ENCODE measurements at regions of chr3 and their contacts with region 1.

Region 1: GRCh38 chr3:8713901-8714759 is 19.5 kb upstream of the CAV3 start:
- DNase-seq: peak in 1 of 2 experiments; percentile 67
- H3K4me3 ChIP-seq: no peak overlapping the region
- H3K27ac ChIP-seq: no peak overlapping the region
- H3K4me1 ChIP-seq: no peaks in the 10 kb centered on the region; a peak in 1 of 7 replicates
- H3K27me3 ChIP-seq: peaks cover 39 to 66% (median 63%) of the 10 kb centered on the region in 4 experiments
- CTCF ChIP-seq: peak; percentile 73 to 77 (median 77)
- EP300 ChIP-seq: no peak
- POLR2A ChIP-seq: no peak
- RAD21 ChIP-seq: peak; percentile 45 to 63

Region 2: GRCh38 chr3:8663177-8664061 is 50.7 kb before region 1 on chr3:
- CTCF ChIA-PET with region 1: interaction called, 20 read pairs
- POLR2A ChIA-PET with region 1: no interaction called
- DNase-seq: peak; percentile 74 to 94
- H3K4me3 ChIP-seq: no peak overlapping the region
- H3K27ac ChIP-seq: no peak overlapping the region
- H3K4me1 ChIP-seq: peaks cover 0 to 6% (median 1%) of the 10 kb centered on the region in 4 experiments; a peak in 2 of 7 replicates
- H3K27me3 ChIP-seq: peaks cover 0 to 3% (median 0%) of the 10 kb centered on the region in 4 experiments; a peak in 2 of 7 replicates
- CTCF ChIP-seq: peak; percentile 66 to 80 (median 76)
- EP300 ChIP-seq: no peak
- POLR2A ChIP-seq: no peak
- RAD21 ChIP-seq: peak; percentile 67 to 76

Region 3: GRCh38 chr3:8733332-8734094 is 19.4 kb after region 1 on chr3 and contains the start of gene CAV3:
- CTCF ChIA-PET with region 1: interaction called, 37 read pairs
- POLR2A ChIA-PET with region 1: no interaction called
- DNase-seq: no peak
- H3K4me3 ChIP-seq: no peak within 1 kb of the TSS
- H3K27ac ChIP-seq: no peak within 1 kb of the TSS
- H3K4me1 ChIP-seq: peaks cover 0 to 7% (median 3%) of the 10 kb centered on the region in 4 experiments; a peak in 4 of 7 replicates
- H3K27me3 ChIP-seq: peaks cover 0 to 2% (median 0%) of the 10 kb centered on the region in 4 experiments; a peak in 3 of 7 replicates
- CTCF ChIP-seq: no peak
- EP300 ChIP-seq: no peak
- POLR2A ChIP-seq: no peak
- RAD21 ChIP-seq: no peak
- total RNA-seq, gene CAV3: not detected in 2 replicates

Region 4: GRCh38 chr3:8741581-8742261 is 27.6 kb after region 1 on chr3:
- CTCF ChIA-PET with region 1: interaction called, 12 read pairs
- POLR2A ChIA-PET with region 1: no interaction called
- DNase-seq: peak in 1 of 2 experiments; percentile 70
- H3K4me3 ChIP-seq: peak overlapping the region in 1 of 4 experiments; percentile 42; a peak in 3 of 8 replicates
- H3K27ac ChIP-seq: no peak overlapping the region
- H3K4me1 ChIP-seq: peaks cover 1 to 20% (median 8%) of the 10 kb centered on the region in 4 experiments
- H3K27me3 ChIP-seq: peaks cover 0 to 4% (median 0%) of the 10 kb centered on the region in 4 experiments; a peak in 1 of 7 replicates
- CTCF ChIP-seq: no peak; a peak in 1 of 4 replicates
- EP300 ChIP-seq: no peak
- POLR2A ChIP-seq: no peak
- RAD21 ChIP-seq: no peak

Region 5: GRCh38 chr3:8755563-8756237 is 41.6 kb after region 1 on chr3:
- CTCF ChIA-PET with region 1: interaction called, 12 read pairs
- POLR2A ChIA-PET with region 1: no interaction called
- DNase-seq: no peak
- H3K4me3 ChIP-seq: no peak overlapping the region
- H3K27ac ChIP-seq: no peak overlapping the region
- H3K4me1 ChIP-seq: peaks cover 0 to 3% (median 1%) of the 10 kb centered on the region in 4 experiments; a peak in 3 of 7 replicates
- H3K27me3 ChIP-seq: peaks cover 0 to 4% (median 0%) of the 10 kb centered on the region in 4 experiments; a peak in 2 of 7 replicates
- CTCF ChIP-seq: peak; percentile 12 to 62 (median 17)
- EP300 ChIP-seq: no peak
- POLR2A ChIP-seq: no peak
- RAD21 ChIP-seq: peak in 1 of 2 experiments; percentile 20; a peak in 3 of 4 replicates